Caco-2 (cell line): ENCODE measurements at regions of chr3 and their contacts with region 1.

Region 1: DNA sequence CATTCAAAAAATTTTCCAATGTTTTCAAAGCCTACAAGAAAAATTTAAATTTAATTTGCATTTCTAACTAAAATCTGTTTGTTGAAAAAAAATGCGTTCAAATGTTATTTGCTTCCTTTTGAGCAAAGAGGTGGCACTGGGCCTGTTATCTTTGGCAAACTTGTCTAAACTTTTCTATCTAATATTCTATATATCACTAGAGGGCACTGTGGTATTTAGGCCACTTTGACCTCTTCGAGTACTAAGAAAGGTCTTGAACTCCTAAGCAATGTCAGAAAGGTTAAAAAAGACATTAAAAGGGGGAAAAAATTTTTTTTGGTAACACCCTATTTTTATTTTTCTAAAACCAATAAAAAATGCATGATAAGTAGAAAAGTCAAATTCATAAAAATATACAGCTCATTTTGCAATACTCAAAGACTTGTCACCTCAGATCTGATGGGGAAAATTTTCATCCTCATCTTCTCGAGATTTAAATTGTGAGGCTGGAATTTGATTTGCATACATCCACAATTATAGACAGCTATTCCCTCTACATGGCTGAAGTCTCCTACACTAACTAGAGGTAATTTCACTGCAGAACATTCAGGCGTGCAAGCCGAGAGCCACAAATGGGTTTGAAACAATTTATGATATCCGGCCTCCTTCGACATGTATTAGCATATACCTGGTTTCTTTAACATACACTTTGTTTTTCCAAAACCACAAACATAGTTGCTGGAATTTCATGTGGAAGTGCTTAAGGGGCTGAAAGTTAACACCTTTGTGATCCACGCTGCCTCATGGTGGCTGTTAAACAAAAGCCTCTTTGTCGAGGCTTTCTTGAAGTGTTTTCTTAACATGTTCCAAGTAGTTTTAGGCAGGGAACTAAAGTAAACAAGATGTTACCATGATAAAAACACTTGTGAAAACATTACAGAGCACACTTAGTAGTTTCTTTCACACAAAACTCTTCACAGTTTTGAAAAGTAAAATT is 576.4 kb downstream of the FOXP1 start:
- DNase-seq: peak in 1 of 2 experiments; percentile 13
- H3K4me3 ChIP-seq: no peak overlapping the region
- H3K4me3 Mint-ChIP-seq: no peak overlapping the region
- H3K27ac Mint-ChIP-seq: no peak overlapping the region
- H3K4me1 ChIP-seq: peaks cover 15% of the 10 kb centered on the region
- H3K4me1 Mint-ChIP-seq: peaks cover 6% of the 10 kb centered on the region
- H3K27me3 ChIP-seq: no peaks in the 10 kb centered on the region
- H3K27me3 Mint-ChIP-seq: no peaks in the 10 kb centered on the region
- CTCF ChIP-seq: peak in 1 of 2 experiments; percentile 40

Region 2: GRCh38 chr3:70716832-70717231 is 290.3 kb before region 1 on chr3:
- CTCF ChIA-PET with region 1: no interaction called
- POLR2A ChIA-PET with region 1: no interaction called
- intact Hi-C with region 1: no loop called
- DNase-seq: no peak
- H3K4me3 ChIP-seq: no peak overlapping the region
- H3K4me3 Mint-ChIP-seq: no peak overlapping the region
- H3K27ac Mint-ChIP-seq: no peak overlapping the region
- H3K4me1 ChIP-seq: no peaks in the 10 kb centered on the region
- H3K4me1 Mint-ChIP-seq: no peaks in the 10 kb centered on the region
- H3K27me3 ChIP-seq: no peaks in the 10 kb centered on the region
- H3K27me3 Mint-ChIP-seq: peaks cover 9% of the 10 kb centered on the region
- CTCF ChIP-seq: no peak

Region 3: DNA sequence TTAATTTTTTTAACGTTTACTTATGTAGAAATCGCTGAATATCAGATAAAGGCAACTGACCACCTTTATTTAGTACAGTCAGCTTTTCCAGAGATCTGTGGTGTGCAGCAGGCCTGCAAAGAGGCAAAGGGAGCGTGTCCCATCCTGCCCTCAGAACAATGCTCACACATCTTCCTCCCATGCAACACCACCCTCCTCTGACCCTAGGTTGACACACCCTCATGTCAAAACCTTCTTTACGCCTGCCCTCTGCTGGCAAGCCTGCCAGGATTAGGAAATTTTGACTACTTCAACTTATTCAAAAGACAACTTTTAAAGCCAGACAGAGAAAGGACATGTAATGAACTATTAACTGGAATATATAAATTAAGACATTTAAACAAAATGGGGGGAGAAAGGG is 62.7 kb after region 1 on chr3:
- CTCF ChIA-PET with region 1: interaction called, 3 read pairs
- POLR2A ChIA-PET with region 1: no interaction called
- intact Hi-C with region 1: loop called (anchors 2 kb)
- DNase-seq: peak; percentile 50 to 55
- H3K4me3 ChIP-seq: no peak overlapping the region
- H3K4me3 Mint-ChIP-seq: no peak overlapping the region
- H3K27ac Mint-ChIP-seq: peak overlapping the region; percentile 74
- H3K4me1 ChIP-seq: peaks cover 59% of the 10 kb centered on the region
- H3K4me1 Mint-ChIP-seq: peaks cover 46% of the 10 kb centered on the region
- H3K27me3 ChIP-seq: no peaks in the 10 kb centered on the region
- H3K27me3 Mint-ChIP-seq: no peaks in the 10 kb centered on the region
- CTCF ChIP-seq: peak; percentile 42 to 68